Activated B cell treated with CpG ODN at 0.5 μM for 24 hours (primary cell): ENCODE measurements at regions of chr10 and their contacts with region 1.

Region 1: DNA sequence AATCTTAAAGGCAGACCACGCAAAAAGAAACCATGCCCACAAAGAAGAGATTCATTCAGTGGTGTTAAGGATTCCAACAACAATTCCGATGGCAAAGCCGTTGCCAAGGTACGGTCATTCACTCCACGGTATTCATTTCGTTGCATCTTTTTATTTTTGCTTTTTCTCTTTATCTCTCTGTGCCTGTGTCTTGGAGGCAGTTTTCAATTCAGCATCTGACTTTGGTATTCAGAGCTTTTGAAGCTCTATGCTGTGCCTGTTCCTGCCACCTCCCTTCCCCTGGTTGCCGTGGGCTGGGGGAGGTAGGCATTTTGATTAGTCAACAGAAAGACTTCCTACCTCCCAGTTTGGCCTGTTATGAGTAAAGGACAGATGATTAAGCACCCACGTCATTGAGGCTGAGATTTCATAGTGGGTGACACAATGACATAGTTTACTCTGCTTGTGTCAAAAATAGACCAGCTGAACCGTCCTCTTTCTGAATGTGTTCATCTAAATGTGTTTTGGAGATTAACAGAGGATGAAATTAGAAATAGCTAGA is 149.5 kb downstream of the ARID5B start:
- DNase-seq: no peak
- ATAC-seq: peak; percentile 60
- H3K4me3 Mint-ChIP-seq: peak overlapping the region; percentile 85
- H3K27ac Mint-ChIP-seq: peak overlapping the region; percentile 93
- H3K4me1 Mint-ChIP-seq: peaks cover 100% of the 10 kb centered on the region
- H3K27me3 Mint-ChIP-seq: no peaks in the 10 kb centered on the region
- CTCF ChIP-seq: no peak

Region 2: GRCh38 chr10:61835069-61835945 is 215.7 kb before region 1 on chr10:
- CTCF ChIA-PET with region 1: no interaction called
- POLR2A ChIA-PET with region 1: no interaction called
- intact Hi-C with region 1: no loop called
- DNase-seq: no peak
- ATAC-seq: no peak
- H3K4me3 Mint-ChIP-seq: no peak overlapping the region
- H3K27ac Mint-ChIP-seq: no peak overlapping the region
- H3K4me1 Mint-ChIP-seq: no peaks in the 10 kb centered on the region
- H3K27me3 Mint-ChIP-seq: no peaks in the 10 kb centered on the region
- CTCF ChIP-seq: no peak

Region 3: DNA sequence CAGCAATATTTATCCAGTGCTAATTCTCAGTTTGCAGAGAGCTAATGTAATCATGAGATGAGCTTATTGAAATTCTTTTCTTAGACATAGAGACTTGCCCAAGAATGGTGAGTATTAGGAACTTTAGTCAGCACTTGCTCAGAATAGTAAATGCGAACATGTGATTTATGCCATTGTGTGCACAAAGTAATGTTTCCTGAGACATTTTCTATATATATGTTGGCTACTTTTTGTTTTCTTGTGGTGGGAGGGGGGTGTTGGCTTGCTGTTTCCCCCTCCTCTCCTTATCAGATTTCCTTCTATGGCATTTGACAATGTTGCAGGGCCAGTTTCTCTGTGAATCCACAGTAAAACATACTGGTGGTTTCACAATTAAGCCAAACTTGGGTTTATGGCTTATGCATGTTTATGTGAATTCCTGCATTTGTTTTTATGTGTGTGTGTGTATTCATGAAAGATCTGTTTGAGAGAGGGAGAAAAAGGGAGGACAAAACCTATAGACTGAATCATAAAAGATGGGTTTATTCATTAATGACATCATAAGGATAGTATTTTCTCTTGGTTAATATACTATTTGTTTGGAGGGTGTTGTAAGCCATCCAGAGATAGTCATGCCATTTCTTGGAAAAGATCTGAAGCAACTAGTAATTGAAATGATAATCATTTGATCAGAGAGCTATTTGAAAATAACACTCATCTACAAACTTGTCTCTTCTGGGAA is 113.2 kb before region 1 on chr10:
- CTCF ChIA-PET with region 1: no interaction called
- POLR2A ChIA-PET with region 1: interaction called, 10 read pairs
- intact Hi-C with region 1: no loop called
- DNase-seq: no peak
- ATAC-seq: no peak
- H3K4me3 Mint-ChIP-seq: no peak overlapping the region
- H3K27ac Mint-ChIP-seq: peak overlapping the region; percentile 84
- H3K4me1 Mint-ChIP-seq: peaks cover 87% of the 10 kb centered on the region
- H3K27me3 Mint-ChIP-seq: no peaks in the 10 kb centered on the region
- CTCF ChIP-seq: no peak

Region 4: GRCh38 chr10:62000037-62000603 is 50.8 kb before region 1 on chr10:
- CTCF ChIA-PET with region 1: interaction called, 3 read pairs
- POLR2A ChIA-PET with region 1: interaction called, 93 read pairs
- intact Hi-C with region 1: loop called (anchors 1 kb)
- DNase-seq: peak; percentile 60
- ATAC-seq: peak; percentile 86
- H3K4me3 Mint-ChIP-seq: peak overlapping the region; percentile 77
- H3K27ac Mint-ChIP-seq: peak overlapping the region; percentile 100
- H3K4me1 Mint-ChIP-seq: peaks cover 95% of the 10 kb centered on the region
- H3K27me3 Mint-ChIP-seq: no peaks in the 10 kb centered on the region
- CTCF ChIP-seq: no peak

Region 5: DNA sequence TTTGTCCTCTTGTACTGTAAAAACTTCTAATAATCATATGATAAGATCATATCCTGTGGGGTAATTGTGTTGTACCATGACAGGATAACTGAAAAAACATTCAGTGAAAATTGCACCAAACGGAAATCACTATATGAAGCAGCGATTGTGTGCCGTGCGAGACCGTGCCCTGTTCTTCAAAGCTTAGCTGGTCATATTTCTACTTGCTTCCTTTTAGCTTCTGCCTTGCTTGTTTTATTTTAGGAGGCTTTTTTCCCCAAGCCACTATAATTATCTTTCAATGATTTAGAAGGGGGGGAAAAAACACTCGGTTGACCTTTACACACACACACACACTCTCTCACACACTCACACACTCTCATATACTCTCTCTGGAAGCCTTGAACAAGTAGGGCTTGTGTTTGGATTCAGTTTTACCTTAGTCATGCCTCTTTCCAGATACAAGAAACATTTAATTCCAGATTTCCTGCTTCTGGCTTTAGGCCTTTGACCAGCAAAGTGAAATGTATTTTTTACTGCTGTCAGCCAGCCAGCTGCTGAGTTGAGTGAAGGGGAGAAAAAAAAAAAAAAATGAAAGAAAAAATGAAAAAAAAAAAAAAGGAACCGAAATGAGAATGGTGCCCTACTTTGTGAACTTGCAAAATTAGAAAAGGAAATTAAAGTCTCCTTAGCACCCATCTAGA is 31.9 kb after region 1 on chr10:
- CTCF ChIA-PET with region 1: interaction called, 6 read pairs
- POLR2A ChIA-PET with region 1: interaction called, 100 read pairs
- intact Hi-C with region 1: loop called (anchors 1 kb)
- DNase-seq: no peak
- ATAC-seq: peak; percentile 48
- H3K4me3 Mint-ChIP-seq: peak overlapping the region; percentile 65
- H3K27ac Mint-ChIP-seq: peak overlapping the region; percentile 96
- H3K4me1 Mint-ChIP-seq: peaks cover 86% of the 10 kb centered on the region
- H3K27me3 Mint-ChIP-seq: no peaks in the 10 kb centered on the region
- CTCF ChIP-seq: no peak

Region 6: DNA sequence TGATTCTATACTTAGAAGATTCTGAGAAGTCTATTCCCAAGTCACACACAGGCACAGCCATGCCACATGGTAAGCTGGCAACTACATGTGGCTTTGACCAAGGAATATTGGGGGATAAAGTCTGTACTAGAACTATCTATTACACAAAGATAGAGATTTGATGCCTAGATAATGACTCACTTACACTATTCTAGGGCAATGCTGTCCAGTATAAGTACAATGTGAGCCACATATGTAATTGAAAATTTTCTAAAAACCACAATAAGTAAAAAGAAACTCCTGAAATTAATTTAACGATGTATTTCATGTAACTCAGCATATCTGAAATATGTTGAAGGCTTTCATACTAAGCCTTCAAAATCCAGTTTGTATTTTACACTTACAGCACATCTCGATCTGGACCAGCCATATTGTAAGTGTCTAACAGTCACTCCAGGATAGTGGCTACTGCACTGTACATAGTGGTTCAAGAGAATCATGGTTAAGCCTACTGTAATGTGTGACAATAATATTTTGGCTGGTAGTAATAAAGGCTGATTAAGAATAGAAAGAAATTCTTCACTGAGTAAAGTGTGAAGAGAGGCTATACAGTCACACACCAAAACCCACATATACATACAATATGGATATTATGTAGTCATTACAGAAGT is 154.9 kb after region 1 on chr10:
- CTCF ChIA-PET with region 1: no interaction called
- POLR2A ChIA-PET with region 1: no interaction called
- intact Hi-C with region 1: no loop called
- DNase-seq: no peak
- ATAC-seq: no peak
- H3K4me3 Mint-ChIP-seq: no peak overlapping the region
- H3K27ac Mint-ChIP-seq: no peak overlapping the region
- H3K4me1 Mint-ChIP-seq: peaks cover 7% of the 10 kb centered on the region
- H3K27me3 Mint-ChIP-seq: no peaks in the 10 kb centered on the region
- CTCF ChIP-seq: no peak

Region 7: DNA sequence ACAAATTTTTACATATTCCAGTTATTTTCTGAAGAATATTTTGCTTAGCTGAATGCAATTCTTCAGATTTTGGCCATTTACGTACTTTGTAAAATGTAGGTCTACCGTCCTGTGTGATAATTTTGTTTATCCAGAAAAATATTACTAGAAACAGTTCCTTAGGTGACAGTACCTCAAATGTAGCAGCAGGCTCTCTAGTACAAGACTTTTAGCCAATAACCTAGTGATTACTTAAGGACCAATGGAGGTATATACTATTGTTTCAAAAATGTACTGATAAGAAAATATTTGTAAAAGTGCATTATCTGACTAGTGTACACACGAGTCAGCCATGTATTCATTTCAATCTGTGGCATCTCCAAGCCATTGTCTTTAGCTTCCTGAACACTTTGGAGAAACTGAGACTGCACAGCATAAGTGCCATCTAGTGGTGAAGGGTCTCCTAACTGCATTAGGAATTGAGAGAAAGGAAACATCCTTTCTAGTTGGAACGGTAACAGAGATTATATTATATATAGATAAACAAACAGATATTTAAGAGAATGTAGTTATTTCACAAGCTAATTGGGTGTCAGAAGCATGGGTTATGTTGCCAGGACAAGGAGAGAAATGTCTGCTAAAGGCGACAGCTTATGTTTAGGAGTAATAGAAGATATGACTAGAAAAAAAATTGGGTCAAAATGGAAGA is 194.0 kb after region 1 on chr10:
- CTCF ChIA-PET with region 1: interaction called, 13 read pairs
- POLR2A ChIA-PET with region 1: interaction called, 26 read pairs
- intact Hi-C with region 1: no loop called
- DNase-seq: no peak
- ATAC-seq: peak; percentile 64
- H3K4me3 Mint-ChIP-seq: peak overlapping the region; percentile 57
- H3K27ac Mint-ChIP-seq: peak overlapping the region; percentile 72
- H3K4me1 Mint-ChIP-seq: peaks cover 45% of the 10 kb centered on the region
- H3K27me3 Mint-ChIP-seq: no peaks in the 10 kb centered on the region
- CTCF ChIP-seq: peak; percentile 74